ENCODE measurements at regions of chr12 and their contacts with region 1.

Region 1: GRCh38 chr12:39272871-39273770 is 169.8 kb downstream of the KIF21A start:
- DNase-seq: peak; percentile 67
- H3K4me3 Mint-ChIP-seq: no peak overlapping the region
- H3K27ac Mint-ChIP-seq: no peak overlapping the region
- H3K4me1 Mint-ChIP-seq: peaks cover 8% of the 10 kb centered on the region
- H3K27me3 Mint-ChIP-seq: no peaks in the 10 kb centered on the region
- CTCF ChIP-seq: peak; percentile 61

Region 2: GRCh38 chr12:38327356-38327755 is 945.8 kb before region 1 on chr12:
- CTCF ChIA-PET with region 1: interaction called, 25 read pairs
- POLR2A ChIA-PET with region 1: interaction called, 3 read pairs
- intact Hi-C with region 1: loop called (anchors 2 kb)
- DNase-seq: no peak
- H3K4me3 Mint-ChIP-seq: no peak overlapping the region
- H3K27ac Mint-ChIP-seq: no peak overlapping the region
- H3K4me1 Mint-ChIP-seq: no peaks in the 10 kb centered on the region
- H3K27me3 Mint-ChIP-seq: no peaks in the 10 kb centered on the region
- CTCF ChIP-seq: no peak

Region 3: DNA sequence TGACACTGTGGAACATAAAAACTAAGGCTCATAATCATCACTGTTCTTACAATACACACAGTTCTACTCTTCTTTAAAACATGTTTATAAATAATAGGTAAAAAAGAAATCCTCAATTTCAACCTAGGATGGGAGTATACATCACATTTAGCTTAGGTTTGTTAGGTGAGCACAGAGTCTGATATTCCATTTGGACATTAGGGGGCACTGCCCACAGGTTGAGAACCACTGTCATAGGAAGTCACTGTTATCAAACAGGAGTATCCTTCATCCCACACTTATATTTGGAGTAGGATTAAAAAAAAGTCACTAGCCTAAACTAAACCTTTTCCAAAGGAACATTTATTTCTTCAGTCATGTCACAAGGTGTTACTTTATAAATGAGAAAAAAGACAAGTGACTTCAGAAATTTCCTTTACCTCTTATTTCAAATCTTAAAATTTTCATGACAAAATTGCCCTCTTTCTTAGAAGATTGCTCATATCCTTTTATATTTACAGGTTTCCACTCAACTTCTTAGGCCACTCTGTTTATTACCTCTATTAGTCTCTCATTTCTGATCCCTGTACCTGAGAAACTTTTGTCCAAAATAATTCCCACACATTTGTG is 608.4 kb before region 1 on chr12:
- CTCF ChIA-PET with region 1: interaction called, 14 read pairs
- POLR2A ChIA-PET with region 1: no interaction called
- intact Hi-C with region 1: loop called (anchors 1 kb)
- DNase-seq: peak; percentile 58
- H3K4me3 Mint-ChIP-seq: no peak overlapping the region
- H3K27ac Mint-ChIP-seq: no peak overlapping the region
- H3K4me1 Mint-ChIP-seq: no peaks in the 10 kb centered on the region
- H3K27me3 Mint-ChIP-seq: no peaks in the 10 kb centered on the region
- CTCF ChIP-seq: peak; percentile 38

Region 4: GRCh38 chr12:39103552-39104165 is 169.5 kb before region 1 on chr12:
- CTCF ChIA-PET with region 1: interaction called, 39 read pairs
- POLR2A ChIA-PET with region 1: interaction called, 3 read pairs
- intact Hi-C with region 1: loop called (anchors 2 kb)
- DNase-seq: peak; percentile 87
- H3K4me3 Mint-ChIP-seq: no peak overlapping the region
- H3K27ac Mint-ChIP-seq: no peak overlapping the region
- H3K4me1 Mint-ChIP-seq: peaks cover 26% of the 10 kb centered on the region
- H3K27me3 Mint-ChIP-seq: no peaks in the 10 kb centered on the region
- CTCF ChIP-seq: peak; percentile 75

Region 5: DNA sequence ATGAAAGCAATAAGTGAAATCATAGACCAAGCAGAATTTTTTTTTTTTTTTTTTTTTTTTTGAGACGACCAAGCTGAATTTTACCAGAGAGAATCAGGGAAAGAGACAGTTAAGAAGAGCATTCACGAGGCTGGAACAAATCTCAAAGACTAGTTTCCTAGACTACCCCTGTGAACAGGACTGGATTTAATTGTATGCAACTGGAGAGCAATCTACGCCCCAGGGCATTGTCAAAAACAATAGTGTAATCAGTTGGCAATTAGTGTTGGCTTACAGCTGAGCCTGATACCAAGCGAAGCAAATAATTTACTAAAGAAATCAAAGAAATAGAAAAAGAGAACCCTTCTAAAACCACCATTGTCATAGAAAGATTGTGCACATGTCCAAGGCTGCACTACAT is 134.9 kb before region 1 on chr12:
- CTCF ChIA-PET with region 1: interaction called, 12 read pairs
- POLR2A ChIA-PET with region 1: no interaction called
- intact Hi-C with region 1: no loop called
- DNase-seq: no peak
- H3K4me3 Mint-ChIP-seq: no peak overlapping the region
- H3K27ac Mint-ChIP-seq: no peak overlapping the region
- H3K4me1 Mint-ChIP-seq: no peaks in the 10 kb centered on the region
- H3K27me3 Mint-ChIP-seq: no peaks in the 10 kb centered on the region
- CTCF ChIP-seq: no peak

Region 6: GRCh38 chr12:39186744-39187143 is 86.4 kb before region 1 on chr12:
- CTCF ChIA-PET with region 1: no interaction called
- POLR2A ChIA-PET with region 1: no interaction called
- intact Hi-C with region 1: no loop called
- DNase-seq: no peak
- H3K4me3 Mint-ChIP-seq: no peak overlapping the region
- H3K27ac Mint-ChIP-seq: no peak overlapping the region
- H3K4me1 Mint-ChIP-seq: no peaks in the 10 kb centered on the region
- H3K27me3 Mint-ChIP-seq: no peaks in the 10 kb centered on the region
- CTCF ChIP-seq: no peak

Region 7: GRCh38 chr12:39252628-39253027 is 20.5 kb before region 1 on chr12:
- CTCF ChIA-PET with region 1: interaction called, 16 read pairs
- POLR2A ChIA-PET with region 1: no interaction called
- intact Hi-C with region 1: no loop called
- DNase-seq: no peak
- H3K4me3 Mint-ChIP-seq: no peak overlapping the region
- H3K27ac Mint-ChIP-seq: no peak overlapping the region
- H3K4me1 Mint-ChIP-seq: no peaks in the 10 kb centered on the region
- H3K27me3 Mint-ChIP-seq: no peaks in the 10 kb centered on the region
- CTCF ChIP-seq: no peak

Region 8: DNA sequence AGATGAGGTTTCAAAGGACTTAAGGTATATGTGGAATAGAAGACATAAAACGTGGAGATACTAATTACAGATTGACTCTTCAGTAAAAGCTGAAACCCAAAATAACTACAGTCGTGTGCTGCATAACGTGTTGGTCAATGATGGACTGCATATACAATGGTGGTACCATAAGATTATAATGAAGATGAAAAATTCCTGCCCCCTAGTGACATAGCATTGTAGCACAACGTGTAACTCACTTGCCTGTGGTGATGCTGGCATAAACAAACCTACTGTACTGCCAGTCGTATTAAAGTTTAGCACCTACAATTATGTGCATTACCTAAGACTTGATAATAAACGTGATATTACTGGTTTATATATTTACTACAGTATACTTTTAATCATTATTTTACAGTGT is 1102.0 kb after region 1 on chr12:
- CTCF ChIA-PET with region 1: no interaction called
- POLR2A ChIA-PET with region 1: no interaction called
- intact Hi-C with region 1: no loop called
- DNase-seq: peak; percentile 17
- H3K4me3 Mint-ChIP-seq: no peak overlapping the region
- H3K27ac Mint-ChIP-seq: no peak overlapping the region
- H3K4me1 Mint-ChIP-seq: no peaks in the 10 kb centered on the region
- H3K27me3 Mint-ChIP-seq: no peaks in the 10 kb centered on the region
- CTCF ChIP-seq: no peak

Measured in MCF 10A (cell line).